Activated CD4-positive, alpha-beta memory T cell treated with anti-CD3 and anti-CD28 coated beads, Interleukin-2, amount 10 ng/mL, durations not matched to agents 7 days and 5 days (primary cell): ENCODE measurements at regions of chr7 and their contacts with region 1.

Region 1: DNA sequence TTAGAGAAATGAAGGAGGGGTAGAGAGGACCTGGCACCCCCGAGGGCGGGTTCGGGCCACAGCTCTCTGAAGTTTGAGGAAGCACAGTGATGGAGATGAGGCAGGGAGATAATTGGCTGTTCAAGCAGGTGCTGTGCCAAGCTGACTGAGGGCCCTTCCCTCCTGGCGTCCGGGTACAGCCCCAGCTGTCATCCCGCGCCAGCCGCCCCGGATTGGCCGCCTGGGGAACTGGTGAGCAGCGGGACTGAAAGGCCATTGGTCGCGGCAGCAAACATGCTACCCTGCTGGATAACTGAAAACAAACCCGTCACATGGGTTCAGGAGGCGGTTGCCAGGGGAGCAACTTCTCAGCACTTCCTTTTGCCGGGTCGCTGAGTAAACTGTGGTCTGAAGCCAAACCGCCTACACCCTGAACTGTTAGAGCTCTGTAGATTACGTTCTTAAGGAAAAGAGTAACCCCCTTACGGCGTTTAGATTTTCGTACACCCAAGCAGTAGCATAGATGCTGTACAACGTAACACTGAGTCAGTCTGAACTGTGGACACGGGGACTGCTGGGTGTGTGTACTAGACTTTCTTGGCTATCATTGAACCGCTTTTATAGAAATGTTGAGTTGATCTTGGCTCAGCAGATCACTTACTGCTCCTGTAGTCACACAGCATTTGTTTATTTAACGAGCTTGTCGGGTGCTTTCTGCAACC is 1.3 kb downstream of the INSIG1 start:
- DNase-seq: peak; percentile 99
- H3K4me3 Mint-ChIP-seq: peak overlapping the region; percentile 89
- H3K27ac Mint-ChIP-seq: peak overlapping the region; percentile 99
- H3K4me1 Mint-ChIP-seq: peaks cover 64% of the 10 kb centered on the region
- H3K27me3 Mint-ChIP-seq: no peaks in the 10 kb centered on the region

Region 2: DNA sequence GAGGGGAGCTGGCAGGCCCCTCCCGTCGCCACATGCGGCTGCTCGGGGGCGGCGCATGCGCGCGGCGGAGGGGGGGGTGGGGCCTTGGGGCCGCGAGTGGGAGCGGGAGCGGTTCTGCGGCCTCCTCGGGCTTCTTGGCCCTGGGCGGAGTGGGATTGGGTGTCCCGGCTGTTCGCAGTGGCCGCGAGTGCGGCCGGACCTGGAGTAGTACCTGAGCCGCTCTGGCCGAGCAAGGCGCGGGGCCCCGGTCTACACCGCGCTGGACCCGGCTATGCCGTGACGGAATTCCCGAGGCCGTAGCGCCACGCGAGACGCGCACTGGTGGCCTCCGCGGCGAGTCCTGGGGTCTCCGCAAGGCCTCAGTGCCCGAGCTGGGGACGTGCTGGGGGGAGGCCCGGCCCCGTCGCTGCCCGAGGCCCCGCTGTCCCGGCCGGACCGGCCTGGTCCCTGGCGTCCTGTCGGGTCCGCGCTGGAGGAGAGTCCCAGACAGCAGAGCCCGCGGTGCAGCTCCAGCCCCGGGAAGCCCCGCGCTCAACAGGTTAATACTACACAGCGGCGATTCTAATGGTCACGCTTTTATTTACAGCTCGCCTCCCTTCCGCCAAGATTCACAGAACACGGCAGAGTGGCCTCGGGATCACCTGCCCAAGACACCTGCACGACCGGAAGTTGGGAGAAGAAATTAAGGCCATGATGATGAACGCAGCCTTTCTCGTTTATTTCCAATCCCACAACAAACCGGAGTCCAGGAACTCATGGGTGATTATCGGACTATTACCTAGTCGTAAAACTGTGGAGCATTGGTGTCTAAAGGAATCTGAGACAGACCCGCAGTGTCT is 295.4 kb before region 1 on chr7:
- CTCF ChIA-PET with region 1: interaction called, 3 read pairs
- POLR2A ChIA-PET with region 1: interaction called, 40 read pairs
- DNase-seq: peak; percentile 85
- H3K4me3 Mint-ChIP-seq: peak overlapping the region; percentile 90
- H3K27ac Mint-ChIP-seq: peak overlapping the region; percentile 78
- H3K4me1 Mint-ChIP-seq: peaks cover 10% of the 10 kb centered on the region
- H3K27me3 Mint-ChIP-seq: no peaks in the 10 kb centered on the region

Region 3: GRCh38 chr7:155073922-155074321 is 225.1 kb before region 1 on chr7:
- CTCF ChIA-PET with region 1: no interaction called
- POLR2A ChIA-PET with region 1: no interaction called
- DNase-seq: no peak
- H3K4me3 Mint-ChIP-seq: no peak overlapping the region
- H3K27ac Mint-ChIP-seq: no peak overlapping the region
- H3K4me1 Mint-ChIP-seq: no peaks in the 10 kb centered on the region
- H3K27me3 Mint-ChIP-seq: peaks cover 27% of the 10 kb centered on the region

Region 4: DNA sequence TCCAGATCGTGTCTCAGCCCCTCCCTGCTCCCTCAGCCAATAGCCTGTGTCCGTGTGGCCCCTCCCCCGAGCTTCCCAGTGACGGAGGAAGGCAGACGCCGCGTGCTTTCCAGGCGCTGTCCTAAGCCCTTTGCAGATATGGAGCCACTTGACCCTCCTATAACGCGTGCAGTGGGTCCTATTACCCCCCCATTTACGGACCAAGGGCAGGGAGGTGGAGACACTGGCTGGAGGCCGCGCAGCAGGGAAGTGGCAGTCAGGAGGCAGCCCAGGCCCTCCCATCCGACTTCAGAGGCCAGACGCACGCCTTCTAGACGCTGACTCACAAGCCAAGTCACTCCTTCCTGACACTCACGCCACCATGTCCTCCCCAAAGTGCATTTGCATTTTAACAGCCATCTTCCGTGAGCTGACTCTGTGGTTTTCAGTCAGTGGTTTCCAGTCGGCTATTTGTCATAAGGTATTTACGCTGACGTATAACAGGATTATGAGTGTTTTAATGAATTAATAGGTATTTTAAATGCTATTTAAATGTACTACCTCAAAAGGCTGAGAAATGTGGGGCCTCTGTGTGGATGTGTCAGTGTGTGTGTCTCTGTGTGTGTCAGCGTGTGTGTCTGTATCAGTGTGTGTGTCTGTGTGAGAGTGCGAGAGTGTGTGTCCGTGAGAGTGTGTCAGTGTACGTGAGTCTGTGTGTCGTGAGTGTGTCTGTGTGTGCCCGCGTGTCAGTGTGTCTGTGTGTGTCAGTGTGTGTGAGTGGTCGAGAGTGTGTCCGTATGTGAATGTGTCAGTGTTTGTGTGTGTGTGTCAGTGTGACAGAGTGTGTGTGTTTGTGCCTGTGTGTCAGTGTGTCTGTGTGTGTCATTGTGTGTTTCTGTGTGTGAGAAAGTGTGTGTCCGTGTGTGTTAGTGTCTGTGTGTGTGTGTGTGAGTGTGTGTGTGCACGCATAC is 93.3 kb before region 1 on chr7:
- CTCF ChIA-PET with region 1: interaction called, 58 read pairs
- POLR2A ChIA-PET with region 1: interaction called, 305 read pairs
- DNase-seq: peak; percentile 94
- H3K4me3 Mint-ChIP-seq: peak overlapping the region; percentile 88
- H3K27ac Mint-ChIP-seq: peak overlapping the region; percentile 99
- H3K4me1 Mint-ChIP-seq: peaks cover 44% of the 10 kb centered on the region
- H3K27me3 Mint-ChIP-seq: no peaks in the 10 kb centered on the region

Region 5: GRCh38 chr7:155269766-155270585 is 29.0 kb before region 1 on chr7:
- CTCF ChIA-PET with region 1: interaction called, 3 read pairs
- POLR2A ChIA-PET with region 1: interaction called, 14 read pairs
- DNase-seq: no peak
- H3K4me3 Mint-ChIP-seq: no peak overlapping the region
- H3K27ac Mint-ChIP-seq: no peak overlapping the region
- H3K4me1 Mint-ChIP-seq: peaks cover 15% of the 10 kb centered on the region
- H3K27me3 Mint-ChIP-seq: peaks cover 14% of the 10 kb centered on the region

Region 6: DNA sequence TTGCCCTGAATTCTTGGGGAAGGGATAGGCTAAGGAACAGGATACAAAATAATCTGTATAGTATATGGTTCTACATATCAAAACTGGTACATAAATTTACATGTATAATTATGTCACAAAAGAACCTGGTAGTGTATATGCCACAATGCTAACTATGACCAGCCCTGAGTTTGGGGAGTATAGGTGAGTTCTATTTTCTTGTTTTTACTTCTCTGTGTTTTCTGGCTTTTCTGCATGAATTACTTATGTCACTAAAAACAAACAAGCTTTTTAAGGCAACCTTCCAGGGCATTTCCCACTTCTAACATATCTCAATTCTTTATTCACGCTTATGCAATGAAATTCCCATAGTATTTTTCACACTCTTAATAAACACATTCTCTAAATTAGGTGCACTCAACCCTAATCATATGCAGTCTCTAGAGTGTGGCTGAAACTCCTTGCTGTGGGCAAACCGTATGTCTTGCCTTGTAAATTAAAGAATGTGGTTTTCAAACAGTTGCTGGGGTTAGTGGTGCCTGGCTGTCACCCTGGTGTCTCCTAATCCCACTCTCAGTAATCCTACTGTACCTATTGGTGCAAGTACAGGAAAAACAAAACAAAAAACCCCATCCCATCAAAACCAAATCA is 15.3 kb before region 1 on chr7:
- CTCF ChIA-PET with region 1: interaction called, 6 read pairs
- POLR2A ChIA-PET with region 1: interaction called, 145 read pairs
- DNase-seq: peak; percentile 44
- H3K4me3 Mint-ChIP-seq: no peak overlapping the region
- H3K27ac Mint-ChIP-seq: peak overlapping the region; percentile 55
- H3K4me1 Mint-ChIP-seq: peaks cover 95% of the 10 kb centered on the region
- H3K27me3 Mint-ChIP-seq: peaks cover 5% of the 10 kb centered on the region

Region 7: GRCh38 chr7:155344600-155345433 is 45.8 kb after region 1 on chr7:
- CTCF ChIA-PET with region 1: interaction called, 15 read pairs
- POLR2A ChIA-PET with region 1: interaction called, 19 read pairs
- DNase-seq: peak; percentile 84
- H3K4me3 Mint-ChIP-seq: peak overlapping the region; percentile 28
- H3K27ac Mint-ChIP-seq: no peak overlapping the region
- H3K4me1 Mint-ChIP-seq: peaks cover 4% of the 10 kb centered on the region
- H3K27me3 Mint-ChIP-seq: peaks cover 27% of the 10 kb centered on the region